Posterior vena cava (tissue), 2 donors: ENCODE measurements at regions of chr11 and their contacts with region 1.

Region 1: GRCh38 chr11:12653725-12654124 is 20.5 kb upstream of the TEAD1 start:
- DNase-seq: no peak

Region 2: GRCh38 chr11:14308114-14308896 is 1654.6 kb after region 1 on chr11:
- intact Hi-C with region 1: loop called in 1 of 2 experiments (anchors 5 kb)
- DNase-seq: no peak